Posterior cingulate gyrus (tissue), 11 donors: ENCODE measurements at regions of chrX and their contacts with region 1.

Region 1: GRCh38 chrX:129637217-129638109 is 17.3 kb downstream of the APLN start:
- DNase-seq: peak; percentile 58 to 96 (median 76)

Region 2: DNA sequence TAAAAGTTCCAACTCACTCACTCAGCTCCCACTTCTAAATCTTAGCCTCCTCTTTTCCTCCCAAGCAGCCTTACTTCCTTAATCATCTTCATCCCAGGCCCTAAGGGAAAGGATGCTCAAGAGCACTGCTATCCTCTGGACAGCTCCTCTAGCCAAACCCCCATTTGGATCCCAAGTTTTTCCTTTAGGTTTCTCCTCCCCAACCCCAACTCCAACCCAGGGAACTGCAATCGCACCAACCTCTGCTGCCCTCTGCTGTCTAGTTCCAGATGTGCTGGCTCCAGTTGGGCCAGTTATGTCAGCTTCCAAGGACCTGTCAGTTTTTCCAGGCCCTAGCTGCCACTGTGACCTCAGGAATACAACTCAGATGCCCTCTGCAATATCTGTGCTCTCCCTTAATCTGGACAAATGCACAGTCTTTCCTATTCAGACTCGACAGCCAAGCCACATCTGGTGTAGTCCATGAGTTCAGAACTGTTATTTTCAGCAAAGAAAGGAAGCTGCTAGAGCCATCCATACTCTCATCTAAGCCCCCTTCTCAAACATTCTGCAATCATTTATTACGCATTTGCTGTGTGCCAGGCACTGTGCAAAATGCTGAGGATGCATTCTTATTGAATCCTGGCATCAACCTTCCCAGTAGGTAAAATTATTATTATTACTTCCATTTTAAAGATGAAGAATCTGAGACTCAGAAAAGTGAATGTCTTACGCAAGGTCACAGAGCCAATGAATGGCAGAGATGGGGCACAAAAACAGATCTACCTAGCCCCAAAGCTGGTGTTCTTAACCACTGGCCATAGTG is 89.0 kb after region 1 on chrX:
- intact Hi-C with region 1: loop called (anchors 1 kb)
- DNase-seq: peak; percentile 27 to 95 (median 64)

Region 3: DNA sequence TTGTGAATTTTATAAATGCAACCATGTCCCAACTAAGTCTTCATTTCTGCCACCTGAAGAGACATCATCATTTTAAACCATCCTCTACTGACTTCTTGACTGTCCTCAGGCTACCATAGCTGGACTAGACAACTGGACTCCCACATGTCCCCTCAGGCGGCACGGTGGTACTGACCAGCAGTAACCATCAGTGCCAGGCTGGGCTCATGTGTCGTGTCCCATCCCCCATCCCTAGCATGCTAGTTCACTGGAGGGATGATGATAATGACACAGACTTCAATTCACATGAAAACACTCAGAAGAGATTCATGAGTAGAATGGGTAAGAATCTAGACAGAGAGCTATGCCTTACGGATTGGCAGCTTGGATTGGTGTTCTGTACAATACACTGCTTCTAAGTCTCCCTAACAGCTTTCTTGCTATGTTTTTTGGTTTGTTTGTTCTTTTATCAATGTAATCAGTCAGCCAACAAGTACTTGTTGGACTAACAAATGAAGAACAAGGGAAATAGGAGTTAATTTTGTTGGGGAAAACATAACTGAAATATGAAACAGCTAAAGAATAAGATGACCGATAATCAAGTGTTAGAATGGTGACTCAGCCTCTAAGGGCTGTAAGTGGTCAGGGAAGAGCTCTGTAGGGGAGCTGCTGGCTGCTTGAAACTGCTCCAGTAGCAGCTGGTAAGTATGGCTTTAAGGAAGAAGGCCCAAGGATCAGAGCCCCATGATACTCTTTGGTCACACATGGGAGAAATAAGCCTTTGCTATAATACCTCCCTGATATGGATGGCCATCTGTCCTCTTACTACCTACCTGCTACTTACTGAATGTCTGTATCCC is 195.9 kb after region 1 on chrX:
- intact Hi-C with region 1: no loop called
- DNase-seq: peak in 5 of 10 donors; percentile 9 to 91 (median 44)

Region 4: DNA sequence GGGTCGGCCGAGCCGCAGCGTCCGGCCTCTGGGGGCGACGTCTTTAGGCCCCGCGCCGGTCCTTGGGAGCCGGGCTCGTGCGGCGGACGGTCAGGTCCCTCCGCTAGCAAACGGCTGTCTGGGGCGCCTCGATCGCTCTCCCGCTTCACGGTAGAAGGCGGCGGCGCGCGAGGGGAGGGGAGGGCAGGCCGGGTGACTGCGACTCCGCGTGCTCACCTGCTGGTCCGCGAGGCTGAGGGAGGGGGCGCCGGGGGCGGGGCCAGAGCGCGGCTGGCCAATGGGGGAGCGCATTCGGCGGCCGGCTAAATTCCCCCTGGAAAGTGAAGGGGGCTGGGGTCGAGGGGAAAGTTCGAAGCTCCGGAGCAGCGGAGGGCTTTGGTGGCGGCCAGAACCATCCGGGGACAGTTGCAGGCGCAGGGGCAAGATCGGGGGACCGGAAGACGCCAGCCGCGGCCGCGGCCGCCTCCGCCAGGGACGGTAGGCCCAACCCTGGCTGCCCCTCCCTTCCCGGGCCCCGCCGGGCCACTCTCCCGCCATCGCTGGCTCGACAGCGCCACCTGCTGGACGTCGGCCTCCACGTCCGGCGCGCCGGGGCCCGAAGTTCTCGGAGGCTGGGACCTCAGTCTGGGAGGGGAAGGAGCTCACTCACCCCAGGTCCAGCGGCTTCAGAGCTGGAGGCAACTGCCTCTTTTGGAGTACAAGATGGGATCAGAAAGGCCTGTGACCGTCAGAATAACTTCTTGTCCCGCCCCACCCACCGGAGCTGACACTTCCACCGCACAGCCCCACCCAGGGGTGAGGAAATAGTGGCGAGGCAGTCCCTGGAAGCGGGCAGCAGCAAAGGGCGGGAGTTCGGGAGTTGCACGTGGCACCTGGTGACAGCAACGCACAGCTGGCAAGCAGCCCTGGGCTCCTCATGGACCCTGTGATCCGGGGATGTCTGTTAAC is 422.9 kb after region 1 on chrX:
- intact Hi-C with region 1: loop called (anchors 10 kb)
- DNase-seq: peak; percentile 56 to 96 (median 79)